Right ventricle myocardium inferior (tissue), 1 donor: ENCODE measurements at regions of chr10 and their contacts with region 1.

Region 1: GRCh38 chr10:71771821-71772617 is 1.3 kb downstream of the VSIR start:
- DNase-seq: peak; percentile 78
- ATAC-seq: peak; percentile 71

Region 2: GRCh38 chr10:71713135-71714030 is 58.6 kb before region 1 on chr10:
- intact Hi-C with region 1: loop called (anchors 1 kb)
- DNase-seq: peak; percentile 89
- ATAC-seq: peak; percentile 82

Region 3: DNA sequence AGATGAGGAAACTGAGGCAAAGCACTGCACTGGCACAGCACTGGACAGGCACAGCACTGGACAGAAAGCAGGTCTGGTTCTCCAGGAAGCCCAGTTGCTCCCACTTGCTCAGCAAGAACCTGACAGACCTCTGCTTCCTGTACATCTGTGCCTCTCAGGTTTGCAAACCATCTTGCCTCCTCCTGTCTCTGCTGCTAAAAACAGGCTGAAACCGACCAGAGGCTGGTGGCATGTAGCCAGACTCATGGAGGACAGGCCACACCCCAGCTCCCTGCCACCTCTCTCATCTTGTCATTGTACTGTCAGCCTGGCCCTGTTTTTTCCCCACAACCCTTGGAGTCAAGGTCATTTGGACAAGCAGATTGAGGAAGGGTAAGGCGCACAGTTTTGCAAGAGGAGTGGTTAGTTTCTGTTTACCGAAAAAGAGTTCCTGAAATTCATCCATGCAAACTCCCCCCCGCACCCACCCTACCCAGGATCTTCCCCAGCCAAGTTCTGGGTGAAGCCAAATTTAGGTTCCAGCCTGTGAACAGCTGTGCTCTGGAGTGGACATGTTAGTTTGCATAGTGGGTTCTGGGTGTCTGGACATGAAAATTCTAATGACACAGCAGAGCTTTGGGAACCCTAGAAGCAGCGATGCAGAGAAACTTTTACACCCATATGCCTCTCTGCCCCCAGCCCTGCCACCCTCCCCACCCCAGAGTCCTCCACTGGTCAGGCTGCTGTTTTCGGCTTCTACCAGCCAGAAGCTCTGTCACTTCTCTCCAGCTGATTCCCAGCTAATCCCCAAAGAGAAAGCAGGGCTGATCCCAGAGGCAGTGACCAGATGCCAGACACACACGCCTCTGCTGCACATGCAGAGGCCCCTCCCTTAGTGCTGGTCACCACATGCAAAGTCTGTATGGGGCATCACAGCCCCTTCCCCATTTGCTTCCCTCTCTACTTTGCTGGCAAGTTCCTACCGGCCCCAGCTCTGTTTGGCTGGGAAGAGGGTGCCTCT is 44.0 kb before region 1 on chr10:
- intact Hi-C with region 1: loop called (anchors 2 kb)
- DNase-seq: peak; percentile 87
- ATAC-seq: peak; percentile 82

Region 4: GRCh38 chr10:71748671-71749191 is 23.3 kb before region 1 on chr10:
- intact Hi-C with region 1: loop called (anchors 1 kb)
- DNase-seq: peak; percentile 93
- ATAC-seq: peak; percentile 63

Region 5: GRCh38 chr10:71893920-71894319 is 121.9 kb after region 1 on chr10:
- intact Hi-C with region 1: no loop called
- DNase-seq: no peak
- ATAC-seq: no peak